ENCODE measurements at regions of chrX and their contacts with region 1.

Region 1: DNA sequence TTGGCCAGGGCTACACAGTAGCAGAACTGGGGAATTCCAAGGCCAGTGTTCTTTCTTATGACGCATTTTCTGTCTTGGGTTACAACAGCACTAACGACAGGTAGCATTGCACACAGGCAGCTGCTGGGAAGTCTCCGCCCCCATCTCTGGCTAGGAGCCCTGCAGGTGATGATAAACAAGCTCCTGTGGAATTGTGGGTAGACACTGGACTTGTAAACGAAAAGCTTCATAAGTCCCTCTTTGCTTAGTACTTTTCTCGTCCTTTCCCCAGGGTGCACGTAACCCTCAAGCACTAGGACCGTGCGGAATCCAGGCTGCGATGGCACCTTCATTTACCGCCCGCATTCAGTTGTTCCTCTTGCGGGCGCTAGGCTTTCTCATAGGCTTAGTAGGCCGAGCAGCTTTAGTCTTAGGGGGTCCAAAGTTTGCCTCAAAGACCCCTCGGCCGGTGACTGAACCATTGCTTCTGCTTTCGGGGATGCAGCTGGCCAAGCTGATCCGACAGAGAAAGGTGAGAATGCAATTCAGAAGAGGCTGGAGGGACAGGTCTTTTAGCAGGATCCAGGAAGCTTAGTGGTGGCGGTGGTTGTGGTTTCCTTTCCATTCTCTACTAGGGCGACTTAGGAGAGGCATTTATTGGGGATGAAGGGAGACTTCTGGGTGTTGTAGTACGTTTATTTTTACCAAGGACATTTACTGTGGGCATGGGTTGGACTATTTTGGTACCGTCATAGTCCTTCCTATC is at the start of gene FAAH2:
- DNase-seq: peak; percentile 83
- H3K4me3 Mint-ChIP-seq: peak within 1 kb of the TSS; percentile 92
- H3K27ac Mint-ChIP-seq: peak within 1 kb of the TSS; percentile 95
- H3K4me1 Mint-ChIP-seq: peaks cover 29% of the 10 kb centered on the region
- H3K27me3 Mint-ChIP-seq: no peaks in the 10 kb centered on the region
- total RNA-seq, gene FAAH2: 9.6 to 12.0 TPM

Region 2: GRCh38 chrX:55717521-55718497 is 1568.9 kb before region 1 on chrX and contains the start of gene RRAGB:
- CTCF ChIA-PET with region 1: no interaction called
- intact Hi-C with region 1: loop called (anchors 5 kb)
- DNase-seq: peak; percentile 91
- H3K4me3 Mint-ChIP-seq: peak within 1 kb of the TSS; percentile 80
- H3K27ac Mint-ChIP-seq: peak within 1 kb of the TSS; percentile 91
- H3K4me1 Mint-ChIP-seq: peaks cover 32% of the 10 kb centered on the region
- H3K27me3 Mint-ChIP-seq: no peaks in the 10 kb centered on the region
- total RNA-seq, gene RRAGB: 3.4 to 4.0 TPM

Region 3: DNA sequence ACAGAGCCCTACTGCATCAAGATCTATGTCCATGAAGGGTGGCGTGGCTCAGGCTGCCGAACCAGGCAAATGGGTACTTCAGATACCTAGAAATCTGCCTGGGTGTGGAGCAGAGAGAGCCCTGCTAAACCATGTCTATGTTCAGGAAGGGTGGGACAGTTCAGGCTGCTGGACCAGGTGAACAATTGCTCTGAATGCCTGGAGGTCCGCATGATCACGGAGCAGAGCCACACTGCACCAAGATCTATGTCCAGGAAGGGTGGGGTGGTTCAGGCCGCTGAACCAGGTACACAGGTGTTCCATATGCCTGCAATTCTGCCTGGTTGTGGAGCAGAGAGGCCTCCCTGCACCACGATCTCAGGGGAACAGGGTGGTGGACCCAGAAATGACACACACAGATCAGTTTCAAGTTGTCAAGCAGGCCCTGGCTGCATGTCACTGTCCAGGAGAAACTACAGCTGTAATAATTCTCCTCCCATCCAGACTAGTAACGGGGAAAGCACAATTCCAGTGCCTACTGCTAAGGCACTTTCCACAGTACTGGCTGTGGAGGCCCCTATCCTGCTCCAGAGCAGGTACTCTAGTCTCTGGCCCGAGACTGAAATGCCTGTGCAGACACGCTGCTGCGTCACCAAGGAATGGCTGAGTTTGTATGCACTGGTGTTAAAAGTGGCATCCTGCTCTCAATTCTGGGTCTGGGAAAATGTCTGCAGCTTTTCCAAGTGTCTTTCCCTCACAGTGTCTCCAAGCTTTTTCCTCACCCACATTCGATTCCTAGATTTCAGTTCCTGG is 698.1 kb before region 1 on chrX:
- CTCF ChIA-PET with region 1: no interaction called
- intact Hi-C with region 1: no loop called
- DNase-seq: no peak
- H3K4me3 Mint-ChIP-seq: no peak overlapping the region
- H3K27ac Mint-ChIP-seq: peak overlapping the region; percentile 50
- H3K4me1 Mint-ChIP-seq: peaks cover 2% of the 10 kb centered on the region
- H3K27me3 Mint-ChIP-seq: no peaks in the 10 kb centered on the region

Region 4: GRCh38 chrX:56813318-56813837 is 473.3 kb before region 1 on chrX:
- CTCF ChIA-PET with region 1: no interaction called
- intact Hi-C with region 1: loop called (anchors 5 kb)
- DNase-seq: peak; percentile 56
- H3K4me3 Mint-ChIP-seq: peak overlapping the region; percentile 69
- H3K27ac Mint-ChIP-seq: peak overlapping the region; percentile 95
- H3K4me1 Mint-ChIP-seq: peaks cover 36% of the 10 kb centered on the region
- H3K27me3 Mint-ChIP-seq: no peaks in the 10 kb centered on the region

Region 5: DNA sequence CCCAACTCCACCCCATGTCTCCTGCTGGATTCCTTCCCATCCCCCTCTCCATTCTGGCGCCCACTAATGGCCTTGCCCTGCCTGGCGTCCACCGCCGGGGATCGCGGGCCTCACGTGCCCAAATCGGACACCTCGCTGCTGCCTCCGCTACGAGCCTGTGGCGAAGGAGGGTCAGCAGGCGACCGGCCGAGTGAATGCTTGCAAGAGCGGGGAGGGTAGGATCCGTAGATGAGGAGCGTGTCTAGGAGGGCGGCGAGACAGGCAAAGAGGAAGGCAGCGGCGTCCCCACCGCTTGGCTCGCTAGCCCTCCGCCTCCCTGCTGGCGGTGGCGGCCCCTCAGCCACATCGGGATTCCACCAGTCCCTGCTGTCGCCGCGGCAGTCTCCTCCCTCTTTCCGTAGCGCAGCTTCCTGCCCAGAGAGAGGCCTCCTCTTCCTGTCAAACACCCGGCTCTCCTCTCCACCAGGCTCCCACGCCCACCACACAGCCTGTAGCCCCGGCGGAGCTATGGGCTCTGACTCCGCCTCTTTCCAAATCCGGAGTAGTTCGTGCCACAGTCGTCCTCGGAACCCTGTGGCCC is 165.4 kb before region 1 on chrX and contains the start of gene SPIN2B:
- CTCF ChIA-PET with region 1: no interaction called
- intact Hi-C with region 1: loop called (anchors 1 kb)
- DNase-seq: peak; percentile 86
- H3K4me3 Mint-ChIP-seq: peak within 1 kb of the TSS; percentile 89
- H3K27ac Mint-ChIP-seq: peak within 1 kb of the TSS; percentile 88
- H3K4me1 Mint-ChIP-seq: peaks cover 10% of the 10 kb centered on the region
- H3K27me3 Mint-ChIP-seq: no peaks in the 10 kb centered on the region
- total RNA-seq, gene SPIN2B: 6.8 to 8.2 TPM

Region 6: DNA sequence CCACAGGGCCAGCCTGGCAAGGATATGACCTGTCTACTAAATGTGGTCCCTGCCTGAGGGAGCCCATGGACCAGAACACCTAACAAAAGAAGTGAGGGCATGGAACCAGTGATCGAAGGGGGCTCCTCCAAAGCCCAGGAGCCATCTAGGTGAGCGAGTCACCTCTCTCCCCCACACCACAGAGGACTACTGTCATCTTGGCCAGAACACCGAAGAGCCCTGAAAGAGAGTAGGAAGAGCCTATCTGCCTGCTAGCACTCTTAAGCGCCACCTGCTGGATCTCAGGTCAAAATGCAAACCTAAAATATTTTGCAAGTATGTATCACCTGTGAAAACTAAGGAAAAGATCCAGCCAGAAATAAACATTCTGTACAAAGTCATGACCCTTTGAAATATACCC is 167.2 kb after region 1 on chrX:
- CTCF ChIA-PET with region 1: interaction called, 3 read pairs
- intact Hi-C with region 1: loop called (anchors 1 kb)
- DNase-seq: peak; percentile 10
- H3K4me3 Mint-ChIP-seq: no peak overlapping the region
- H3K27ac Mint-ChIP-seq: no peak overlapping the region
- H3K4me1 Mint-ChIP-seq: no peaks in the 10 kb centered on the region
- H3K27me3 Mint-ChIP-seq: no peaks in the 10 kb centered on the region

Region 7: GRCh38 chrX:57906790-57907189 is 620.1 kb after region 1 on chrX:
- CTCF ChIA-PET with region 1: no interaction called
- intact Hi-C with region 1: loop called (anchors 2 kb)
- DNase-seq: no peak
- H3K4me3 Mint-ChIP-seq: no peak overlapping the region
- H3K27ac Mint-ChIP-seq: no peak overlapping the region
- H3K4me1 Mint-ChIP-seq: peaks cover 30% of the 10 kb centered on the region
- H3K27me3 Mint-ChIP-seq: no peaks in the 10 kb centered on the region

Measured in activated naive CD4-positive, alpha-beta T cell treated with anti-CD3 and anti-CD28 coated beads for 36 hours (primary cell).